CD8-positive, alpha-beta T cell (primary cell): ENCODE measurements at regions of chr11 and their contacts with region 1.

Region 1: DNA sequence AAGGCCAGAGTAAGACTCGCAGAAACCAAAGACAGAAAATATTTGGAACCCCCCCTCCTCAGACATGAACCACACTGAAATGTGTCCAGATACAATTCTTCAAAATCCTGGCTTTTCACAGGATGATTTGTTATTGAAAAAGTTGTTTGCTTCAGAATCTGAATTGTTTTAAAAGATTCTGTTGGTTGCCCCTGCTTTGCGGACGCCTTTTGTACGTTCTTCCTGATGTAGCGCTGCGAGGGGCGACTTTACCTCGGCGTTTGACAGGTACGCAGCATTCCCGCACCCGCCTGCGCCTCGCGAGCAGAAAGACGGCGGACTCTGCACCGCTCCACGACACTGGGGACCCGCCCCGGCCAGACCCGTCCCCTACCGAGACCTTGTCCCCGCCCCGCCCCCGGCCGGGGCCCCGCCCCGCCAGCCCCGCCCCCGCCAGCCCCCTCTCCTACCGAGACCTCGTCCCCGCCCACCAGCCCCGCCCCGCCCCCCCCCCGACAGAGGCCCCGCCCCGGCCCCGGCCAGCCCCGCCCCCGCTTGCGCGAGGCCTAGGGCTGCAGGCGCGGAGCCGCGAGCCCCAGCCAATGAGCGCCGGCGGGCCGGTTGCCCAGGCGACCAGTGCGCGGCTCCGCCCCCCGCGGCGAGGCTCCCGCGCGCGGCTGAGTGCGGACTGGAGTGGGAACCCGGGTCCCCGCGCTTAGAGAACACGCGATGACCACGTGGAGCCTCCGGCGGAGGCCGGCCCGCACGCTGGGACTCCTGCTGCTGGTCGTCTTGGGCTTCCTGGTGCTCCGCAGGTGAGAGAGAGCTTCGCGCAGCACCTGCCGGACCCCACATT is at the start of gene GLB1L2:
- DNase-seq: peak; percentile 51 to 89 (median 77)
- ATAC-seq: peak; percentile 88
- H3K4me3 ChIP-seq: peak within 1 kb of the TSS; percentile 73 to 76
- H3K4me3 Mint-ChIP-seq: peak within 1 kb of the TSS; percentile 86
- H3K27ac ChIP-seq: peak within 1 kb of the TSS in 1 of 2 experiments; percentile 19
- H3K27ac Mint-ChIP-seq: no peak within 1 kb of the TSS
- H3K4me1 ChIP-seq: peaks cover 14% of the 10 kb centered on the region
- H3K4me1 Mint-ChIP-seq: peaks cover 13% of the 10 kb centered on the region
- H3K27me3 ChIP-seq: no peaks in the 10 kb centered on the region
- H3K27me3 Mint-ChIP-seq: peaks cover 13% of the 10 kb centered on the region
- CTCF ChIP-seq: no peak
- total RNA-seq, gene GLB1L2: 0.92 to 1.00 TPM

Region 2: DNA sequence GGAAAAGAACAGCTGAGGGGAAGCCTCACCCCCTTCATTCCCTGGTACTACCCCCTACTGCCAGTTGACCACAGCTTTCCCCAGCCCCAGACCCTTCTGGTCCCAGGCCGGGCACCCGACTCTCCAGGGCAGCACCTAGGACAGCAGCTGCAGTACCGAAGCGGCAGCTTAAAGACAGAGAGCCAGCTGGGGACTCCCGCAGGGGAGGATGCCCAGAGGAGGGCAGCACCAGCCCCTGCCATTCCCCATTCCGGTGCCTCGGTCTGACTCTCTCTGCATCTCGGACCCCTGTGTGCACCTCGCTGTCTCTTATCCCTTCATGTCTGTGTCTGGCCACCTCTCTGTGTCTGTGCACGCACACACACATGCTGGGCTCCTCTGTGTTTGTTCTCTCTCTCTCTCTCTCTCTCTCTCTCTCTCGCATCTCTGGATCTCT is 384.2 kb before region 1 on chr11:
- CTCF ChIA-PET with region 1: no interaction called
- POLR2A ChIA-PET with region 1: no interaction called
- intact Hi-C with region 1: loop called in 1 of 2 experiments (anchors 5 kb)
- DNase-seq: peak; percentile 41 to 81 (median 68)
- ATAC-seq: peak; percentile 32
- H3K4me3 ChIP-seq: peak overlapping the region in 1 of 2 experiments; percentile 7
- H3K4me3 Mint-ChIP-seq: peak overlapping the region; percentile 60
- H3K27ac ChIP-seq: no peak overlapping the region
- H3K27ac Mint-ChIP-seq: peak overlapping the region; percentile 79
- H3K4me1 ChIP-seq: peaks cover 58% of the 10 kb centered on the region
- H3K4me1 Mint-ChIP-seq: peaks cover 51% of the 10 kb centered on the region
- H3K27me3 ChIP-seq: peaks cover 0 to 10% of the 10 kb centered on the region in 2 experiments
- H3K27me3 Mint-ChIP-seq: no peaks in the 10 kb centered on the region
- CTCF ChIP-seq: peak; percentile 24

Region 3: GRCh38 chr11:134033696-134034491 is 297.7 kb before region 1 on chr11:
- CTCF ChIA-PET with region 1: no interaction called
- POLR2A ChIA-PET with region 1: no interaction called
- intact Hi-C with region 1: loop called in 1 of 2 experiments (anchors 5 kb)
- DNase-seq: peak; percentile 31 to 86 (median 74)
- ATAC-seq: peak; percentile 84
- H3K4me3 ChIP-seq: peak overlapping the region; percentile 26 to 55
- H3K4me3 Mint-ChIP-seq: peak overlapping the region; percentile 76
- H3K27ac ChIP-seq: peak overlapping the region; percentile 57 to 65
- H3K27ac Mint-ChIP-seq: peak overlapping the region; percentile 92
- H3K4me1 ChIP-seq: peaks cover 72% of the 10 kb centered on the region
- H3K4me1 Mint-ChIP-seq: peaks cover 75% of the 10 kb centered on the region
- H3K27me3 ChIP-seq: no peaks in the 10 kb centered on the region
- H3K27me3 Mint-ChIP-seq: no peaks in the 10 kb centered on the region
- CTCF ChIP-seq: no peak

Region 4: GRCh38 chr11:134207538-134208239 is 123.9 kb before region 1 on chr11:
- CTCF ChIA-PET with region 1: no interaction called
- POLR2A ChIA-PET with region 1: no interaction called
- intact Hi-C with region 1: loop called in 1 of 2 experiments (anchors 5 kb)
- DNase-seq: peak; percentile 37 to 76 (median 69)
- ATAC-seq: peak; percentile 36
- H3K4me3 ChIP-seq: no peak overlapping the region
- H3K4me3 Mint-ChIP-seq: no peak overlapping the region
- H3K27ac ChIP-seq: no peak overlapping the region
- H3K27ac Mint-ChIP-seq: no peak overlapping the region
- H3K4me1 ChIP-seq: no peaks in the 10 kb centered on the region
- H3K4me1 Mint-ChIP-seq: peaks cover 2% of the 10 kb centered on the region
- H3K27me3 ChIP-seq: no peaks in the 10 kb centered on the region
- H3K27me3 Mint-ChIP-seq: no peaks in the 10 kb centered on the region
- CTCF ChIP-seq: peak; percentile 92

Region 5: DNA sequence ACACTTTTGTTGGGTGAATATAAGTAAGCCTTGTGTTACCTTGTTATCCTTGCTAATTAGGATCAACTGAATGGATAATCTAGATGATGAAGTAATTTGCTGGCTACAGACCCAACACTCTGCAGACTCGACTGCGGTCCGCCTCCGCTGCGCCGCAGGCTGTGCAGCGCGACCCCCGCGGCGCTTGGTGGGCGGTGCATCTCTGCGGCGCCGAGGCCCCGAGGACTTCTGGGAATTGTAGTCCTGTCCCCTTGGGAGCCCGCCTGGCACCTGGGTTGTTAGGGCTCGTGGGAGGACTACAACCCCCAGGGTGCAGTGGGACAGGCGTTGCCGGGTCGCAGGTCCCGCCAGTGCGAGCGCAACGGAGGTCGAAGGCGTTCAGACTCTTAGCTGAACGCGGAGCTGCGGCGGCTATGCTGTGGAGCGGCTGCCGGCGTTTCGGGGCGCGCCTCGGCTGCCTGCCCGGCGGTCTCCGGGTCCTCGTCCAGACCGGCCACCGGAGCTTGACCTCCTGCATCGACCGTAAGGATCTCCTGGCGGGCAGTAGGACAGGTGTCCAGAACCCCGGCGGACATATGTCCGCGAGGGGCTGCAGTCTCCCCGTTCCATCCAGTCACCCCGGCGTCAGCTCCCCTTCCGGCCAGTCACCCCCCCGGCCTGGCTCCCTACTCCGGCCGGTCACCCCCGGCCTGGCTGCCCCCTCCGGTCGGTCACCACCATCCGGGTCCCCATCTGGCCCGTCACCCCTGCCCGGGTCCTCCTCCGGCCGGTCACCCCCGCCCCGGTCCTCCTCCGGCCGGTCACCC is 78.2 kb before region 1 on chr11 and contains the starts of genes ACAD8 and THYN1:
- CTCF ChIA-PET with region 1: no interaction called
- POLR2A ChIA-PET with region 1: interaction called, 3 read pairs
- intact Hi-C with region 1: loop called (anchors 1 kb)
- DNase-seq: peak; percentile 92 to 98 (median 96)
- ATAC-seq: peak; percentile 99
- H3K4me3 ChIP-seq: peak within 1 kb of the TSS; percentile 88 to 91
- H3K4me3 Mint-ChIP-seq: peak within 1 kb of the TSS; percentile 92
- H3K27ac ChIP-seq: peak within 1 kb of the TSS; percentile 52 to 75
- H3K27ac Mint-ChIP-seq: peak within 1 kb of the TSS; percentile 94
- H3K4me1 ChIP-seq: peaks cover 12% of the 10 kb centered on the region
- H3K4me1 Mint-ChIP-seq: peaks cover 36% of the 10 kb centered on the region
- H3K27me3 ChIP-seq: no peaks in the 10 kb centered on the region
- H3K27me3 Mint-ChIP-seq: no peaks in the 10 kb centered on the region
- CTCF ChIP-seq: no peak
- total RNA-seq, gene ACAD8: 19.5 to 20.3 TPM
- total RNA-seq, gene THYN1: 27.1 to 31.5 TPM

Region 6: DNA sequence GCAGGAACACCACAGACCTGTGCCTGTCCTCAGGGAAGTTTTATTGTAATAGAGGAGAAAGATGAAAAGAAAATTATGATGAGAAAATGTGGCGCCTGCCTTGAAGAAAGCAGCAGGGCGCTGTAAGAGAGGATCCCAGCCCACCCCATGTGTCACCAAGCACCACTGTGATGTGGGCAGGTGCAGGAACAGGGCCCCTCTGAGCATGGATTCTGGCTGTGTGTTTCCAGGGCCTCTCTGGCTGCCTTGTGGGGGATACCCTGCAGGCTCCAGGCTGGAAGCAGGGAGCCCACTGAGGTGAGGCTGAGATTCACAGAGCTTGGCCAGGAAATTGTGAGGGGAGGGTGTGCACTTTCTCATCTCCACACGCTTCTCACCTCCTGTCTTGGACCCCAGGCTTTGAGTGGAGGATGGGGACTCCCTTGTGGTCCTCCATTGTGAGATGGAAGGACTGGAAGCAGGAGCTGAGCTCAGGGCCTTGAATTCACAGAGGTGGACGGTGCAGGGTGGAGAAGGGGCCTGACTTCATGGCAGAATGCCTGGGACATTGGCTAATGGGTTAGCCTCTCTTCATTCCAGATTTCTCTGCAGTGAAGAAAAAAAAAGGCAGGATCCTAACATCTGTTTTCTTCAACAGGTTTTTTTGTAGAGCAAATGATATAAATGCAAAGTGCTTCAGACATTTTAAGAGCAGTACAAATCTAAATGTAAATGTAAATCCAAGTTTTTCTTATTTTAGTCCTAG is 327.1 kb after region 1 on chr11:
- CTCF ChIA-PET with region 1: no interaction called
- POLR2A ChIA-PET with region 1: no interaction called
- intact Hi-C with region 1: loop called in 1 of 2 experiments (anchors 2 kb)
- DNase-seq: peak in 2 of 9 experiments; percentile 2 to 19
- ATAC-seq: no peak
- H3K4me3 ChIP-seq: no peak overlapping the region
- H3K4me3 Mint-ChIP-seq: no peak overlapping the region
- H3K27ac ChIP-seq: no peak overlapping the region
- H3K27ac Mint-ChIP-seq: no peak overlapping the region
- H3K4me1 ChIP-seq: peaks cover 28% of the 10 kb centered on the region
- H3K4me1 Mint-ChIP-seq: peaks cover 19% of the 10 kb centered on the region
- H3K27me3 ChIP-seq: no peaks in the 10 kb centered on the region
- H3K27me3 Mint-ChIP-seq: peaks cover 10% of the 10 kb centered on the region
- CTCF ChIP-seq: no peak